WTC11 (cell line): ENCODE measurements at regions of chr4 and their contacts with region 1.

Region 1: GRCh38 chr4:1309261-1310010 is 19.7 kb downstream of the MAEA start:
- DNase-seq: peak; percentile 95
- ATAC-seq: peak; percentile 99
- H3K4me3 Mint-ChIP-seq: peak overlapping the region; percentile 53
- H3K27ac Mint-ChIP-seq: peak overlapping the region; percentile 99
- H3K4me1 Mint-ChIP-seq: peaks cover 30% of the 10 kb centered on the region
- H3K27me3 Mint-ChIP-seq: no peaks in the 10 kb centered on the region
- CTCF ChIP-seq: no peak

Region 2: DNA sequence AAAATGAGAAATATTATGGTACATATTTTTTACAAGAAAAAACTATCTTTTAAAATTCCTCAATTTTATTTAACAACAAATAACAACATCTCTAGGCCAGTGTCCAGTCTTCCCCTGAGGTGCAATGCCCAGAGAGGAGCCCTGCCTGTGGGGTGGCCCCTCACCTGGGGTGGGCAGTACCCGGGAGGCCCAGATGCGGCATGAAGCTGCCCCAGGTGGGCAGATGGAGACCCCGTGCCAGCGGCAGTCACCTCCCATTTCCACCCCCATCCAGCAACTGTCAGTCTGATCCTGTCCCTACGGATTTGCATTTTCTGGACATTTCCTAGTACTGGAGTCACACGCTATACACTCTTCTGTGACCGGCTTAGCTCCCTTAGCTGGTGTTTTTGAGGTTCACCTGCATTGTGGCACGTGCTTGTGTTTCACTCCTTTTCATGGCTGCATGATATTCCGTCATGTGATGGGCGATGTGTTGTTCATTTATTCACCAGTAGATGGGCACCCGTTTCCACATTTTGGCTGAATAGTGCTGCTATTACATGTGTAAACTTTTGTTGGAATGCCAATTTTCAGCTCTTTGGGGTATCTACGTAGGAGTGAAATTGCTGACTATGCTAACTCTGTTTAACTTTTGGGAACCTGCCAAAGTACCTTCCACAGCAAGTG is 31.6 kb before region 1 on chr4:
- CTCF ChIA-PET with region 1: no interaction called
- POLR2A ChIA-PET with region 1: no interaction called
- DNase-seq: no peak
- ATAC-seq: no peak
- H3K4me3 Mint-ChIP-seq: no peak overlapping the region
- H3K27ac Mint-ChIP-seq: no peak overlapping the region
- H3K4me1 Mint-ChIP-seq: no peaks in the 10 kb centered on the region
- H3K27me3 Mint-ChIP-seq: peaks cover 4% of the 10 kb centered on the region
- CTCF ChIP-seq: no peak

Region 3: GRCh38 chr4:1289207-1290164 is 19.9 kb before region 1 on chr4 and contains the start of gene MAEA:
- CTCF ChIA-PET with region 1: interaction called, 8 read pairs
- POLR2A ChIA-PET with region 1: interaction called, 13 read pairs
- DNase-seq: peak; percentile 98
- ATAC-seq: peak; percentile 96
- H3K4me3 Mint-ChIP-seq: peak within 1 kb of the TSS; percentile 97
- H3K27ac Mint-ChIP-seq: peak within 1 kb of the TSS; percentile 97
- H3K4me1 Mint-ChIP-seq: peaks cover 39% of the 10 kb centered on the region
- H3K27me3 Mint-ChIP-seq: peaks cover 10% of the 10 kb centered on the region
- CTCF ChIP-seq: no peak
- total RNA-seq, gene MAEA: 66.9 to 86.9 TPM (median 79.8 TPM) in 3 replicates

Region 4: GRCh38 chr4:1346781-1347409 is 37.5 kb after region 1 on chr4 and contains the start of gene UVSSA:
- CTCF ChIA-PET with region 1: interaction called, 13 read pairs
- POLR2A ChIA-PET with region 1: interaction called, 8 read pairs
- DNase-seq: peak; percentile 100
- ATAC-seq: peak; percentile 93
- H3K4me3 Mint-ChIP-seq: peak within 1 kb of the TSS; percentile 86
- H3K27ac Mint-ChIP-seq: peak within 1 kb of the TSS; percentile 91
- H3K4me1 Mint-ChIP-seq: peaks cover 27% of the 10 kb centered on the region
- H3K27me3 Mint-ChIP-seq: no peaks in the 10 kb centered on the region
- CTCF ChIP-seq: no peak
- total RNA-seq, gene UVSSA: 36.9 to 41.5 TPM (median 40.4 TPM) in 3 replicates